Activated naive CD4-positive, alpha-beta T cell treated with anti-CD3 and anti-CD28 coated beads for 36 hours (primary cell): ENCODE measurements at regions of chr10 and their contacts with region 1.

Region 1: DNA sequence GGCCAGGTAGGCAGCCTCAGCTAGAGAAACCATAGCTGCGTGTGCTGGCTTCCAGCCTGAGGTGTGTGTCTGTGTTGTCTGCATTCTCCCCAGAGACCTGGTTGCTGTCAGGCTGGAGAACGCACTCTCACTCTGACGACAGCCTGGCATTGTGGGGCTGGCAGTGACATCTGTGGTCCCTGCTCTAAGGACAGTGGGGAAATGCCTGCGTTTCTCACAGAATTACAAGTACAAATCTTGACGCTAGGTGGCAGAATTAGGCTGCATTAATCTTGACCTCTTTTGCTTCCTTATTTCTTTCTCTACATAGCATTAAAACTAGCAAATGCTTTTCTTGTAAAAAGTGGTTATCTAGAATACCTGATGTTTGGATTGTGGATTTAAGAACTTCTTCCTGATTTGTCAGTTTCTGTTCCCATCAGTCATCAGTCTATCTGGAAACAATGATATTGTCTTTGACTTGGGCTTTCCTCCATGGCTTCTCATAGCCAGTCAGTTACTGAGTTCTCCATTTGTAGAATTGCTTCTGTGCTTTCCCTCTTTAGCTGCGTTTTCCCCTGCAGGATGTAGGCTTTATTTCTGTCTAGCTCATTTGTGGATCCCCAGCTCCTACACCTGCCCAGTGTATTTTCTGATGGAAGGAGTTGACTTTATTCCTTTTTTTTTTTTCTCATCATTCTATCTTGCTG is 86.0 kb downstream of the FANK1 start:
- DNase-seq: peak; percentile 29
- H3K4me3 Mint-ChIP-seq: no peak overlapping the region
- H3K27ac Mint-ChIP-seq: no peak overlapping the region
- H3K4me1 Mint-ChIP-seq: no peaks in the 10 kb centered on the region
- H3K27me3 Mint-ChIP-seq: peaks cover 10% of the 10 kb centered on the region

Region 2: GRCh38 chr10:125605167-125605566 is 377.2 kb before region 1 on chr10:
- CTCF ChIA-PET with region 1: no interaction called
- intact Hi-C with region 1: no loop called
- DNase-seq: no peak
- H3K4me3 Mint-ChIP-seq: no peak overlapping the region
- H3K27ac Mint-ChIP-seq: no peak overlapping the region
- H3K4me1 Mint-ChIP-seq: no peaks in the 10 kb centered on the region
- H3K27me3 Mint-ChIP-seq: peaks cover 3% of the 10 kb centered on the region

Region 3: GRCh38 chr10:125719146-125720001 is 263.0 kb before region 1 on chr10 and contains the start of gene EDRF1:
- CTCF ChIA-PET with region 1: no interaction called
- intact Hi-C with region 1: no loop called
- DNase-seq: peak; percentile 99
- H3K4me3 Mint-ChIP-seq: peak within 1 kb of the TSS; percentile 88
- H3K27ac Mint-ChIP-seq: peak within 1 kb of the TSS; percentile 98
- H3K4me1 Mint-ChIP-seq: peaks cover 30% of the 10 kb centered on the region
- H3K27me3 Mint-ChIP-seq: no peaks in the 10 kb centered on the region
- total RNA-seq, gene EDRF1: 24.0 to 25.0 TPM

Region 4: GRCh38 chr10:125868372-125868975 is 113.9 kb before region 1 on chr10:
- CTCF ChIA-PET with region 1: interaction called, 4 read pairs
- intact Hi-C with region 1: loop called (anchors 1 kb)
- DNase-seq: peak; percentile 38
- H3K4me3 Mint-ChIP-seq: no peak overlapping the region
- H3K27ac Mint-ChIP-seq: no peak overlapping the region
- H3K4me1 Mint-ChIP-seq: no peaks in the 10 kb centered on the region
- H3K27me3 Mint-ChIP-seq: no peaks in the 10 kb centered on the region

Region 5: DNA sequence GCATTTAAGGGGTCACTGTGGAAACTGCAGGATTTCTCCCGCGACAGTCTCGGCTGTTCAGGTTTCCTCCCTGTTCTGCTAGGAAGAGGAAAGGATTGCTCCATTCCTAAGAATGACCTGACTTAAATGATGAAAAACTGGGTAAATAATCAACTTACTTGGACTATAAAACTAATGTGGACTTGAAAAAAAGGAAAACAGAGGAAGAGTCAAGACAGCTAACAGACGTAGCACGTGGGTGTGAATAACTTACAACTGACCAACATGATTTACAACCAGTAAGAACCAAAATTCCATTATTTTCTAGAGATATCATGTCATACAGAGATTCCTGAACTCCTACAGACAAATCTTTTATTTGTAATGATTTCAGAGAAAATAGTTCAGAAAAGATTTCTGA is 312.0 kb after region 1 on chr10:
- CTCF ChIA-PET with region 1: no interaction called
- intact Hi-C with region 1: no loop called
- DNase-seq: no peak
- H3K4me3 Mint-ChIP-seq: no peak overlapping the region
- H3K27ac Mint-ChIP-seq: no peak overlapping the region
- H3K4me1 Mint-ChIP-seq: no peaks in the 10 kb centered on the region
- H3K27me3 Mint-ChIP-seq: peaks cover 4% of the 10 kb centered on the region

Region 6: GRCh38 chr10:126387023-126387921 is 404.9 kb after region 1 on chr10:
- CTCF ChIA-PET with region 1: no interaction called
- intact Hi-C with region 1: loop called (anchors 1 kb)
- DNase-seq: peak; percentile 44
- H3K4me3 Mint-ChIP-seq: no peak overlapping the region
- H3K27ac Mint-ChIP-seq: no peak overlapping the region
- H3K4me1 Mint-ChIP-seq: peaks cover 5% of the 10 kb centered on the region
- H3K27me3 Mint-ChIP-seq: peaks cover 51% of the 10 kb centered on the region

Region 7: DNA sequence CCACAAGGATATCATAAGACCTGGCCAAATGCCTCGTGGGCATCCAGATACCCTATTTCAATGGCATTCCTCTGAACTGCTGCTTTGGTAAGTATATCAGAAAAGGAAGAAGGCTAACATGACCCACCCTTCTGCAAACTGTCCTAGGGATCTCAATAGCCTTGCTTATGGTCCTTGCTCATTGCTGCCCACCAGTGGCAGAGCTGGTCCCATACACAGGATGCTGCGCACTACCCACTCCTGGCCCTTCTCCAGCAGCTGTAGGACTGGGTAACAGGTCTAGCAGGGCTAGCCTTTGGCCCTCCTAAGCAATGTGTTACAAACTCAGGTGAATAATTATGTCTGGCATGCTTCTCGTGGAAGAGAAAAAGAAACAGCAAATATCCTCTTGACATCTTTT is 615.6 kb after region 1 on chr10:
- CTCF ChIA-PET with region 1: no interaction called
- intact Hi-C with region 1: loop called (anchors 1 kb)
- DNase-seq: peak; percentile 14
- H3K4me3 Mint-ChIP-seq: no peak overlapping the region
- H3K27ac Mint-ChIP-seq: no peak overlapping the region
- H3K4me1 Mint-ChIP-seq: no peaks in the 10 kb centered on the region
- H3K27me3 Mint-ChIP-seq: no peaks in the 10 kb centered on the region

Region 8: DNA sequence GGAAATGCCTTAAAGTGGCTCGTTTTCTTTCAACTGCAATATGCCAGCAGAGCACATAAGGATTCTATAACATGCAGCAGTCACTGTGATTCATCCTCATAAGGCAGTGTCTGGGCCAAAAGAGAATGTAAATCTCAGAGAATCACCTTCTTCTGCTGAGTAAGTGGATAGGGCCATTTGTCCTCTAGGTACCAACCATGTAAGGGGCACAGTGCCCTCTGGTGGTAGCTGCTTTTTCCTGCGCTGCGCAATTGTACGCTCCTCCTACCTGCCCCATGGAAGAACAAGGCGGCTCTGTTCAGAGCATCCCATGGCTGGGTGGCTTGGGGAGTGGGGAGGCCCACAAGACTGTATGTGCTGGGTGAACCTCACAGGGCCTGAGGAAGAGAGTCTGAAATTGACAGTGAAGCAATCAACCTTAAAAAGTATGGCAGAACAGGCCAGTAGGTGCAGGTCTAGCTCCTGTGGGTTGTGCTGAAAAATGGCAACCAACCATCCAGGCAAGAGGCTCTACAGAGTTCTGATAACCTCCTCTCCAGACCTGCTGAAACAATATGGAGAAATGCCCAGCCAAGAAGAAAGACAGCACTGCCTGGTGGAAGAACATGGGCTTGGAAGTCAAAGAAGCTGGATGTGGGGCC is 766.7 kb after region 1 on chr10:
- CTCF ChIA-PET with region 1: interaction called, 3 read pairs
- intact Hi-C with region 1: loop called (anchors 1 kb)
- DNase-seq: peak; percentile 69
- H3K4me3 Mint-ChIP-seq: no peak overlapping the region
- H3K27ac Mint-ChIP-seq: no peak overlapping the region
- H3K4me1 Mint-ChIP-seq: no peaks in the 10 kb centered on the region
- H3K27me3 Mint-ChIP-seq: no peaks in the 10 kb centered on the region